Endothelial cell of umbilical vein (primary cell): ENCODE measurements at regions of chr2 and their contacts with region 1.

Region 1: DNA sequence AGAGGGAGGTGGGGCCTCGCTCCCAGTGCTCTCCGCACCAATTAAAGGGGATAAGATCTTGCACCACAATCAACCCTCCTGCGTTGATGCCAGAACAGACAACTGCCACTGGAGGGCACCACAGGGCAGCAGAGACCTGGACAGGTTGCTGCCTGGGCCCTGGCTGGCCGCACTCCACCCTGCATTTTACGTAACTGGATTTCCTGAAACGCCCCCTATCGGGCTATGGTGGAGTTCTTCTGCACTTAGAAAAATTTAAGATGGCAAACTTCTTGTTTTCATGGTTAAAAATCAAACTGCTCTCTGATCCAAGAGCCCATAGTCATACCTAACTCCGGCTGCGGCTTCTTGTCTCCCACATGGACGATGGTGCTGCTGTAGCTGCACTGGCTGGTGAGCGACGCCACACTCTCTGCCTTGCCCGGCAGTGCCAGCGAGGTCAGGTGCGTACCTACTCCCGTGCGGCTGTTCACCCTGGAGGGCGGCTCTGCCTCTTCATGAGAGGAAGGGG is 16.8 kb upstream of the HES6 start:
- DNase-seq: peak; percentile 80
- H3K4me3 ChIP-seq: no peak overlapping the region
- H3K27ac ChIP-seq: no peak overlapping the region
- H3K4me1 ChIP-seq: no peaks in the 10 kb centered on the region
- H3K27me3 ChIP-seq: no peaks in the 10 kb centered on the region
- CTCF ChIP-seq: peak; percentile 91 to 93
- POLR2A ChIP-seq: no peak

Region 2: GRCh38 chr2:237978058-237978712 is 278.5 kb before region 1 on chr2:
- CTCF ChIA-PET with region 1: no interaction called
- POLR2A ChIA-PET with region 1: no interaction called
- dilution Hi-C with region 1: no loop called
- intact Hi-C with region 1: no loop called
- DNase-seq: no peak
- H3K4me3 ChIP-seq: no peak overlapping the region
- H3K27ac ChIP-seq: no peak overlapping the region
- H3K4me1 ChIP-seq: no peaks in the 10 kb centered on the region
- H3K27me3 ChIP-seq: no peaks in the 10 kb centered on the region
- CTCF ChIP-seq: no peak
- POLR2A ChIP-seq: no peak

Region 3: DNA sequence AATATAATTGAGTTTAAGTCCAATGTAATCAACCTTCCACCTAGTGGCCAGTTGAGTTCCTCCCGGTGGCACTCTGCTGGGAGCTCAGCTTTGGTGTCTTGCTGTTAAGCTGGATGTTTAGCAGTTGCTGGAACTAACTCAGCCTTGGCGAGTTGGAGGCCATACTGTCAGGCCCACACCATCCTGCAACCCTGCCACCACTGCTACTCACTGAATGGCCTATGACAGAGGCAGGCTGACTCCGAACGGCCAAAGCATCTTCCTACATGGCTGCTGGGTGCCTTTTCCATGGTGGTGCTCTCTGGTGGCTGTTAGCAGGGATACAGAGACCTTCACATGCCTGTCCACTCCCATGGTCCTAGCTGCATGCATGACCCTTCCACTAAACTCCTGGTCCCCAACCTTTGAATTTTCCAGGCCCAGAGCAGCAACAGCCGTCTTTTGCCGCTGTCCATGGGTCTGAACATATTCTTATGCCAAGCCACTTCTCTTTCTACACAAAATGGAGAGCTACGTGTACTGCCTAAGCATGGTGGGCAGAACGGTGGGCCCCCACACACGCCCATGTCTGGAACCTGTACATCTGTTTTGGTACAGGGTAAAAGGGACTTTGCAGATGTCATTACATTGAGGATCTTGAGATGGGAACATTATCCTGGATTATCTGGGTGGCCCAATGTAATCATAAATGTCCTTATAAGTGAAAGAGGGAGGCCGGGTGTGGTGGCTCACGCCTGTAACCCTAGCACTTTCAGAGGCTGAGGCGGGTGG is 48.6 kb after region 1 on chr2:
- CTCF ChIA-PET with region 1: no interaction called
- POLR2A ChIA-PET with region 1: no interaction called
- dilution Hi-C with region 1: no loop called
- intact Hi-C with region 1: loop called (anchors 1 kb)
- DNase-seq: peak; percentile 8
- H3K4me3 ChIP-seq: no peak overlapping the region
- H3K27ac ChIP-seq: no peak overlapping the region
- H3K4me1 ChIP-seq: no peaks in the 10 kb centered on the region
- H3K27me3 ChIP-seq: peaks cover 1 to 4% of the 10 kb centered on the region in 2 experiments
- CTCF ChIP-seq: peak in 1 of 2 donors; percentile 15
- POLR2A ChIP-seq: no peak

Region 4: DNA sequence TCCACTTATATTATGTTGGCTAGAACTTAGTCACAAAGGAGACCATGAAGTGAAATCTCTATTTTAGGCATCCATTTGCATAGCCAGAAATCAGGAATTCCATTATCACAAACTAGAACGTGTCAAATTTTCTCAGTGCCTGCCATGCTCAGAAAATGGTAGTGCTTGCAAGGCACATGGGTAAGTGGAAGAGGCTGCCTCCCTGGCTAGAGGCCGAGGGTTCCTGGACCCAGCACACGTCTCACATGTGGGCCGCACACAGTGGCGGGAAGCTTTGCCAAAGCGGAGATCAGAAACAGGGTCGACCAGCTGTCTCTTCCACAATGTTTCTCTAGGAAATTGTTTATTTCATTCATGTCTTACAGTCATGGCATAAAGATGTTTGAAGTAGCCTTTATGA is 106.0 kb after region 1 on chr2:
- CTCF ChIA-PET with region 1: no interaction called
- POLR2A ChIA-PET with region 1: no interaction called
- dilution Hi-C with region 1: no loop called
- intact Hi-C with region 1: loop called (anchors 1 kb)
- DNase-seq: no peak
- H3K4me3 ChIP-seq: no peak overlapping the region
- H3K27ac ChIP-seq: no peak overlapping the region
- H3K4me1 ChIP-seq: no peaks in the 10 kb centered on the region
- H3K27me3 ChIP-seq: no peaks in the 10 kb centered on the region
- CTCF ChIP-seq: no peak
- POLR2A ChIP-seq: no peak